GM12878 (cell line): ENCODE measurements at regions of chr4 and their contacts with region 1.

Region 1: GRCh38 chr4:110516106-110516922 is 40.4 kb downstream of the ENPEP start:
- DNase-seq: peak; percentile 30
- ATAC-seq: peak; percentile 94
- H3K4me3 ChIP-seq: peak overlapping the region; percentile 64; the same call in 1 of the 2 replicates
- H3K27ac ChIP-seq: no peak overlapping the region; the same call in 1 of the 2 replicates
- H3K4me1 ChIP-seq: no peaks in the 10 kb centered on the region
- H3K27me3 ChIP-seq: no peaks in the 10 kb centered on the region
- CTCF ChIP-seq: peak; percentile 76 to 82 (median 82)
- EP300 ChIP-seq: no peak
- POLR2A ChIP-seq: no peak
- RAD21 ChIP-seq: peak; percentile 54

Region 2: GRCh38 chr4:109998867-109999584 is 517.3 kb before region 1 on chr4:
- CTCF ChIA-PET with region 1: interaction called, 812 read pairs
- POLR2A ChIA-PET with region 1: no interaction called
- RAD21 ChIA-PET with region 1: interaction called, 35 read pairs
- SMC1A ChIA-PET with region 1: interaction called, 114 read pairs
- in situ Hi-C with region 1: loop called (anchors 5 kb)
- intact Hi-C with region 1: loop called (anchors 1 kb)
- DNase-seq: peak; percentile 38
- ATAC-seq: peak; percentile 65
- H3K4me3 ChIP-seq: no peak overlapping the region
- H3K27ac ChIP-seq: no peak overlapping the region
- H3K4me1 ChIP-seq: peaks cover 15% of the 10 kb centered on the region
- H3K27me3 ChIP-seq: no peaks in the 10 kb centered on the region
- CTCF ChIP-seq: peak; percentile 48 to 79 (median 67); a peak in 5 of 6 replicates
- EP300 ChIP-seq: no peak
- POLR2A ChIP-seq: no peak
- RAD21 ChIP-seq: peak; percentile 85

Region 3: DNA sequence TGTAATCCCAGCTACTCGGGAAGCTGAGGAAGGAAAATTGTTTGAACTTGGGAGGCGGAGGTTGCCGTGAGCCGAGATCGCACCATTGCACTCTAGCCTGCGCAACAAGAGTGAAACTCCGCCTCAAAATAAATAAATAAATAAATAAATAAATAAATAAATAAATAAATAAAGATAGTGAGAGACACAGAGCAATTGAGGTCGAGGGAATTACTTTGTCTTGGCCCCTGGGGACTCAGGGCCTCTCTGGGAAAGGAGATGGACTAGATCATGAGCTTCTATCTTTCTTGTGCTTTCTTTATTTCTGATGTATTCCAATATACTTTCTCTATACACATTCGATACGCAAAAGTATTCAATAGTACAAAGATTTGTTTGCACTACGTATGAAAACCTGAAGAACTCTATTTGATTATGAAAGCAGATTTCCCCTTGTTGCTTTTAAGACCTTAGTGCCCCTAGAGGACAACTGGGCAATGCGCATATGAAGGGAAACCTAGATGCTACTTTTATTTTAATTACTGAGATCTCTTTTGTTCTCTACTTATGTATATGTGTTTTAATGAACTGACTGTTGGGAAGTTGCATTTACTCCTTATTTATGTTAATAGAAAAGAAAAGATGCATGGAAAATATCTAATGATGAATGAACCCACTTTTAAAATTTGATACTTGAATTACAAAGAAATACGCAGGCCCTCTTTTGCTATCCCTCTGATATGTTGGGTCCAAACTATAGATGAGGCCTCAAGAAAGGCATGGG is 305.1 kb before region 1 on chr4:
- CTCF ChIA-PET with region 1: interaction called, 3 read pairs
- POLR2A ChIA-PET with region 1: no interaction called
- RAD21 ChIA-PET with region 1: no interaction called
- SMC1A ChIA-PET with region 1: no interaction called
- in situ Hi-C with region 1: no loop called
- intact Hi-C with region 1: loop called (anchors 5 kb)
- DNase-seq: no peak
- ATAC-seq: peak; percentile 94
- H3K4me3 ChIP-seq: no peak overlapping the region
- H3K27ac ChIP-seq: no peak overlapping the region
- H3K4me1 ChIP-seq: no peaks in the 10 kb centered on the region
- H3K27me3 ChIP-seq: no peaks in the 10 kb centered on the region
- CTCF ChIP-seq: peak; percentile 71 to 80 (median 75)
- EP300 ChIP-seq: no peak
- POLR2A ChIP-seq: no peak
- RAD21 ChIP-seq: peak; percentile 86

Region 4: GRCh38 chr4:110344162-110344561 is 172.2 kb before region 1 on chr4:
- CTCF ChIA-PET with region 1: interaction called, 67 read pairs
- POLR2A ChIA-PET with region 1: no interaction called
- RAD21 ChIA-PET with region 1: interaction called, 6 read pairs
- SMC1A ChIA-PET with region 1: interaction called, 20 read pairs
- in situ Hi-C with region 1: no loop called
- intact Hi-C with region 1: loop called (anchors 10 kb)
- DNase-seq: no peak
- ATAC-seq: no peak
- H3K4me3 ChIP-seq: no peak overlapping the region
- H3K27ac ChIP-seq: no peak overlapping the region
- H3K4me1 ChIP-seq: no peaks in the 10 kb centered on the region
- H3K27me3 ChIP-seq: 0 out of 4 replicates have a peak, but pooled peaks cover 0 to 2% of the 10 kb centered on the region in 2 experiments
- CTCF ChIP-seq: peak in 2 of 3 experiments; percentile 3 to 29; a peak in 2 of 6 replicates
- EP300 ChIP-seq: no peak
- POLR2A ChIP-seq: no peak
- RAD21 ChIP-seq: peak; percentile 60

Region 5: GRCh38 chr4:110501826-110502225 is 14.5 kb before region 1 on chr4:
- CTCF ChIA-PET with region 1: interaction called, 19 read pairs
- POLR2A ChIA-PET with region 1: no interaction called
- RAD21 ChIA-PET with region 1: no interaction called
- SMC1A ChIA-PET with region 1: interaction called, 6 read pairs
- in situ Hi-C with region 1: no loop called
- intact Hi-C with region 1: no loop called
- DNase-seq: no peak
- ATAC-seq: no peak
- H3K4me3 ChIP-seq: no peak overlapping the region
- H3K27ac ChIP-seq: no peak overlapping the region
- H3K4me1 ChIP-seq: peaks cover 11% of the 10 kb centered on the region
- H3K27me3 ChIP-seq: no peaks in the 10 kb centered on the region; a peak in 1 of 4 replicates
- CTCF ChIP-seq: no peak
- EP300 ChIP-seq: no peak
- POLR2A ChIP-seq: no peak
- RAD21 ChIP-seq: no peak